Psoas muscle (tissue), 8 donors: ENCODE measurements at regions of chr11 and their contacts with region 1.

Region 1: GRCh38 chr11:43819926-43820325 is 60.7 kb upstream of the ALKBH3 start:
- DNase-seq: no peak
- ATAC-seq: no peak
- H3K4me3 ChIP-seq: no peak overlapping the region
- H3K27ac ChIP-seq: no peak overlapping the region
- H3K4me1 ChIP-seq: no peaks in the 10 kb centered on the region
- H3K27me3 ChIP-seq: no peaks in the 10 kb centered on the region
- CTCF ChIP-seq: no peak

Region 2: GRCh38 chr11:43311791-43312607 is 507.9 kb before region 1 on chr11 and contains the start of gene API5:
- intact Hi-C with region 1: no loop called
- DNase-seq: peak; percentile 92 to 95
- ATAC-seq: peak; percentile 99 to 100 (median 100)
- H3K4me3 ChIP-seq: peak within 1 kb of the TSS; percentile 85
- H3K27ac ChIP-seq: peak within 1 kb of the TSS; percentile 80
- H3K4me1 ChIP-seq: peaks cover 22% of the 10 kb centered on the region
- H3K27me3 ChIP-seq: no peaks in the 10 kb centered on the region
- CTCF ChIP-seq: peak; percentile 58
- total RNA-seq, gene API5: 38.3 to 70.1 (median 52.9) TPM

Region 3: GRCh38 chr11:43467958-43468357 is 352.0 kb before region 1 on chr11:
- intact Hi-C with region 1: no loop called
- DNase-seq: no peak
- ATAC-seq: no peak
- H3K4me3 ChIP-seq: no peak overlapping the region
- H3K27ac ChIP-seq: no peak overlapping the region
- H3K4me1 ChIP-seq: no peaks in the 10 kb centered on the region
- H3K27me3 ChIP-seq: no peaks in the 10 kb centered on the region
- CTCF ChIP-seq: no peak

Region 4: DNA sequence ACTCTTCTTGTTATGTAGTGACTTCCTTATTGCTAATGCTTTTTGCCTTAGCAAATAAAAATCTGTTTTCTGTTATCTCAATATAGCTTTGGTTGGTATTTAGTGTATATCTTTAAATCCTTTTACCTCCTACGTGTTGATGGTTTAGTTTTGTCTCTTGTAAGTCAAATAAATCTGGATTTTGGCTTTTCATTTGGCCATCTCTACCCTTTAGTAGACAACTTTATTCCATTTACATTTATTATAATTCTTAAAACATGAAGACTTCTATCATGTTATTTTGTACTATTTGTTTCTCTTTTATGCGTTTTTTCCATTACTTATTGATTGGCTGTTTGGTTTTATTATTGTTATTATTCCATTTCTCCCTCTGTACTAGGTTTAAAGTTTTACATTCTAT is 41.2 kb after region 1 on chr11:
- intact Hi-C with region 1: loop called in 1 of 2 experiments (anchors 5 kb)
- DNase-seq: no peak
- ATAC-seq: no peak
- H3K4me3 ChIP-seq: no peak overlapping the region
- H3K27ac ChIP-seq: no peak overlapping the region
- H3K4me1 ChIP-seq: no peaks in the 10 kb centered on the region
- H3K27me3 ChIP-seq: no peaks in the 10 kb centered on the region
- CTCF ChIP-seq: no peak